GM12878 (cell line): ENCODE measurements at regions of chr6 and their contacts with region 1.

Region 1: GRCh38 chr6:85482905-85483700 is 33.2 kb downstream of the NT5E start:
- DNase-seq: no peak
- ATAC-seq: peak; percentile 98
- H3K4me3 ChIP-seq: no peak overlapping the region
- H3K27ac ChIP-seq: no peak overlapping the region
- H3K4me1 ChIP-seq: no peaks in the 10 kb centered on the region
- H3K27me3 ChIP-seq: no peaks in the 10 kb centered on the region
- CTCF ChIP-seq: peak; percentile 98 to 100 (median 99); a peak in 5 of 6 replicates
- EP300 ChIP-seq: no peak
- POLR2A ChIP-seq: no peak
- RAD21 ChIP-seq: peak; percentile 91

Region 2: DNA sequence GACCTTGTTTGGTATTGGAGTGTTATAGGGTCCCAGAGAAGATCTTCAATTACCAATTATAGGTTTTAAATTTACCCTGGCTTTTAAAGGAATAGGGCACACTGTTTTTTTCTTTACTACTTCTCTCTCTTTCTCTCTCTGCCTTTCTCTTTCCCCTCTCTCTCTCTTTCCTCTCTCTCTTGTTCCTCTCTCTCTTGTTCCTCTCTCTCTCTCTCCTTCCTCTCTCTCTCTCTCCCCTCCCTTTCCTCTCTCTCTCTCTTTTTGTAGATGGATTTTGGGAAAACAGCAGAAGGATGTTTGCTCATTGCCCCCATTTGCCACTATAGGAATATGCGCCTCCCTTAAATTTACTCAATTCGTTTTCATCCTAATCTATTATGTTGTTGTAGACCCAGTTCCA is 764.0 kb before region 1 on chr6:
- CTCF ChIA-PET with region 1: no interaction called
- POLR2A ChIA-PET with region 1: no interaction called
- RAD21 ChIA-PET with region 1: no interaction called
- SMC1A ChIA-PET with region 1: no interaction called
- in situ Hi-C with region 1: no loop called
- intact Hi-C with region 1: no loop called
- DNase-seq: no peak
- ATAC-seq: no peak
- H3K4me3 ChIP-seq: no peak overlapping the region
- H3K27ac ChIP-seq: no peak overlapping the region
- H3K4me1 ChIP-seq: no peaks in the 10 kb centered on the region
- H3K27me3 ChIP-seq: no peaks in the 10 kb centered on the region
- CTCF ChIP-seq: no peak
- EP300 ChIP-seq: no peak
- POLR2A ChIP-seq: no peak
- RAD21 ChIP-seq: no peak

Region 3: GRCh38 chr6:85323435-85324040 is 159.6 kb before region 1 on chr6:
- CTCF ChIA-PET with region 1: interaction called, 19 read pairs
- POLR2A ChIA-PET with region 1: no interaction called
- RAD21 ChIA-PET with region 1: interaction called, 4 read pairs
- SMC1A ChIA-PET with region 1: interaction called, 4 read pairs
- in situ Hi-C with region 1: no loop called
- intact Hi-C with region 1: no loop called
- DNase-seq: peak; percentile 25
- ATAC-seq: peak; percentile 93
- H3K4me3 ChIP-seq: no peak overlapping the region
- H3K27ac ChIP-seq: no peak overlapping the region
- H3K4me1 ChIP-seq: no peaks in the 10 kb centered on the region
- H3K27me3 ChIP-seq: no peaks in the 10 kb centered on the region; a peak in 1 of 4 replicates
- CTCF ChIP-seq: peak; percentile 80 to 88 (median 84)
- EP300 ChIP-seq: no peak
- POLR2A ChIP-seq: no peak
- RAD21 ChIP-seq: peak; percentile 92

Region 4: GRCh38 chr6:85360794-85361642 is 122.1 kb before region 1 on chr6:
- CTCF ChIA-PET with region 1: interaction called, 217 read pairs
- POLR2A ChIA-PET with region 1: no interaction called
- RAD21 ChIA-PET with region 1: interaction called, 113 read pairs
- SMC1A ChIA-PET with region 1: interaction called, 162 read pairs
- in situ Hi-C with region 1: no loop called
- intact Hi-C with region 1: no loop called
- DNase-seq: no peak
- ATAC-seq: peak; percentile 31; the same call in 1 of the 3 replicates
- H3K4me3 ChIP-seq: no peak overlapping the region
- H3K27ac ChIP-seq: no peak overlapping the region
- H3K4me1 ChIP-seq: no peaks in the 10 kb centered on the region
- H3K27me3 ChIP-seq: no peaks in the 10 kb centered on the region
- CTCF ChIP-seq: no peak
- EP300 ChIP-seq: no peak
- POLR2A ChIP-seq: no peak
- RAD21 ChIP-seq: no peak

Region 5: DNA sequence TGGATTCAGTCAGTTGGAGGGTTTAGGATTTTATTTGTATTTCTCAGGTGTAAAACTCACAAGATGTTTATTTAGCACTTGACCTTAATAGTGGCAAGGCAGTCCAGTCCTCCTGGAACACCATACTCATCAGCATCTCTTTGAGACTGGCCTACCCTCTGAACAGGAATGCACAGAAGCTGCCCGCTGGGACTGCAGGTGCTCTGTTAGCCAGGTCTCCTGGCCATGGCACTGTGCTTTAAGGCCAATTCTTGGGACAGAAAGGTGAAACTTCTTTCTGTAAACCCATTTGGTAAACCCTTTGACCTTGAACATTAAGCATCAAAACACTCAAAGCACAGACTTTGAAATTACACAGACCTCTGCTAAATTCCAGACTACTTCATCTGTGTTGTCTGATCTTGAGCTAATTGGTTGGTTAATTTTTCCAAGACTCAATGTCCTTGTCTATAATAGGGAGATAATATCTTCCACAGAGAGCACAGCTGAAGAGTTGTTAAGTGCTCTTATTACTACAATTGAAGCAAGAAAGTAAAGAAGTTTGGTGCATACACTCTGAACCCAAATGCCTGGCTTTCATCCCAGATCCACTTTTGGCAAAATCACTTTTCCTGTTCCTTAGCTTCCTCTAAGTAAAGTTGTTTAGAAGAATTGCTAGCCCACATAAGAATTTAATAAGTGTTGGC is 88.1 kb before region 1 on chr6:
- CTCF ChIA-PET with region 1: interaction called, 10 read pairs
- POLR2A ChIA-PET with region 1: no interaction called
- RAD21 ChIA-PET with region 1: interaction called, 4 read pairs
- SMC1A ChIA-PET with region 1: interaction called, 9 read pairs
- in situ Hi-C with region 1: no loop called
- intact Hi-C with region 1: no loop called
- DNase-seq: no peak
- ATAC-seq: no peak
- H3K4me3 ChIP-seq: no peak overlapping the region
- H3K27ac ChIP-seq: no peak overlapping the region
- H3K4me1 ChIP-seq: no peaks in the 10 kb centered on the region
- H3K27me3 ChIP-seq: no peaks in the 10 kb centered on the region
- CTCF ChIP-seq: no peak
- EP300 ChIP-seq: no peak
- POLR2A ChIP-seq: no peak
- RAD21 ChIP-seq: no peak

Region 6: GRCh38 chr6:85449818-85450759 is 33.0 kb before region 1 on chr6 and contains the start of gene NT5E:
- CTCF ChIA-PET with region 1: interaction called, 188 read pairs
- POLR2A ChIA-PET with region 1: interaction called, 5 read pairs
- RAD21 ChIA-PET with region 1: interaction called, 80 read pairs
- SMC1A ChIA-PET with region 1: interaction called, 120 read pairs
- in situ Hi-C with region 1: no loop called
- intact Hi-C with region 1: loop called (anchors 2 kb)
- DNase-seq: no peak
- ATAC-seq: peak; percentile 88
- H3K4me3 ChIP-seq: peak within 1 kb of the TSS; percentile 83
- H3K27ac ChIP-seq: peak within 1 kb of the TSS; percentile 81
- H3K4me1 ChIP-seq: peaks cover 19% of the 10 kb centered on the region
- H3K27me3 ChIP-seq: no peaks in the 10 kb centered on the region
- CTCF ChIP-seq: peak in 2 of 3 experiments; percentile 14 to 20; a peak in 1 of 6 replicates
- EP300 ChIP-seq: no peak
- POLR2A ChIP-seq: peak; percentile 79
- RAD21 ChIP-seq: 0 out of 2 replicates have a peak, but pooled peaks have one; percentile 4
- polyA plus RNA-seq, gene NT5E: 1.9 to 3.9 TPM

Region 7: GRCh38 chr6:85498596-85499258 is 15.6 kb after region 1 on chr6:
- CTCF ChIA-PET with region 1: interaction called, 73 read pairs
- POLR2A ChIA-PET with region 1: no interaction called
- RAD21 ChIA-PET with region 1: interaction called, 9 read pairs
- SMC1A ChIA-PET with region 1: interaction called, 59 read pairs
- in situ Hi-C with region 1: no loop called
- intact Hi-C with region 1: no loop called
- DNase-seq: no peak
- ATAC-seq: no peak
- H3K4me3 ChIP-seq: no peak overlapping the region
- H3K27ac ChIP-seq: no peak overlapping the region
- H3K4me1 ChIP-seq: no peaks in the 10 kb centered on the region
- H3K27me3 ChIP-seq: no peaks in the 10 kb centered on the region
- CTCF ChIP-seq: no peak
- EP300 ChIP-seq: no peak
- POLR2A ChIP-seq: no peak
- RAD21 ChIP-seq: no peak

Region 8: DNA sequence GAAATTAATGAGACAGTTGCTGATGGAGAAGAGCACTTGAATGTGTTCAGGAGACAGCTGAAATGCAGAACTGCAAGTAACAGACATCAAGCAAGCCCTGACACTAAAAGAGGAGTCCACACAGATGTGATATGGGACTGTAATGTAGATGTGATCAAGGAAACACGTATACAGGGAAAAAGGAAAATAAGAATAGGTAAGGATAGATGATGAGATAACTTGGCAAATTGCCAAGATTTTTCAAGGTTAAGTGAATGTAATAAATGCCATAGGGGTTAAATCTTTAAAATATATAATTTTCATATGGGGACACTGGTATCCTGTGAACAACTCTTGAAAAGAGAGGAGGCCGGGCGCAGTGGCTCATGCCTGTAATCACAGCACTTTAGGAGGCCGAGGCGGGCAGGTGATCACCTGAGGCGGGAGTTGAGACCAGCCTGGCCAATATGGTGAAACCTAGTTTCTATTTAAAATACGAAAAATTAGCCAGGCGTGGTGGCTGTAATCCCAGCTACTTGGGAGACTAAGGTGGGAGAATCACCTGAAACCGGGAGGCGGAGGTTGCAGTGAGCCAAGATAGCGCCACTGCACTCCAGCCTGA is 117.7 kb after region 1 on chr6:
- CTCF ChIA-PET with region 1: no interaction called
- POLR2A ChIA-PET with region 1: no interaction called
- RAD21 ChIA-PET with region 1: no interaction called
- SMC1A ChIA-PET with region 1: no interaction called
- in situ Hi-C with region 1: no loop called
- intact Hi-C with region 1: no loop called
- DNase-seq: no peak
- ATAC-seq: no peak
- H3K4me3 ChIP-seq: no peak overlapping the region
- H3K27ac ChIP-seq: no peak overlapping the region
- H3K4me1 ChIP-seq: no peaks in the 10 kb centered on the region
- H3K27me3 ChIP-seq: no peaks in the 10 kb centered on the region
- CTCF ChIP-seq: no peak
- EP300 ChIP-seq: no peak
- POLR2A ChIP-seq: no peak
- RAD21 ChIP-seq: no peak

Region 9: GRCh38 chr6:85678602-85679444 is 195.7 kb after region 1 on chr6:
- CTCF ChIA-PET with region 1: interaction called, 14 read pairs
- POLR2A ChIA-PET with region 1: no interaction called
- RAD21 ChIA-PET with region 1: interaction called, 10 read pairs
- SMC1A ChIA-PET with region 1: interaction called, 11 read pairs
- in situ Hi-C with region 1: no loop called
- intact Hi-C with region 1: no loop called
- DNase-seq: peak; percentile 93
- ATAC-seq: peak; percentile 81
- H3K4me3 ChIP-seq: peak overlapping the region; percentile 89
- H3K27ac ChIP-seq: peak overlapping the region; percentile 92
- H3K4me1 ChIP-seq: peaks cover 13% of the 10 kb centered on the region
- H3K27me3 ChIP-seq: no peaks in the 10 kb centered on the region
- CTCF ChIP-seq: no peak
- EP300 ChIP-seq: no peak
- POLR2A ChIP-seq: peak; percentile 100
- RAD21 ChIP-seq: peak; percentile 19; the same call in 1 of the 2 replicates